Posterior vena cava (tissue), 2 donors: ENCODE measurements at regions of chr3 and their contacts with region 1.

Region 1: DNA sequence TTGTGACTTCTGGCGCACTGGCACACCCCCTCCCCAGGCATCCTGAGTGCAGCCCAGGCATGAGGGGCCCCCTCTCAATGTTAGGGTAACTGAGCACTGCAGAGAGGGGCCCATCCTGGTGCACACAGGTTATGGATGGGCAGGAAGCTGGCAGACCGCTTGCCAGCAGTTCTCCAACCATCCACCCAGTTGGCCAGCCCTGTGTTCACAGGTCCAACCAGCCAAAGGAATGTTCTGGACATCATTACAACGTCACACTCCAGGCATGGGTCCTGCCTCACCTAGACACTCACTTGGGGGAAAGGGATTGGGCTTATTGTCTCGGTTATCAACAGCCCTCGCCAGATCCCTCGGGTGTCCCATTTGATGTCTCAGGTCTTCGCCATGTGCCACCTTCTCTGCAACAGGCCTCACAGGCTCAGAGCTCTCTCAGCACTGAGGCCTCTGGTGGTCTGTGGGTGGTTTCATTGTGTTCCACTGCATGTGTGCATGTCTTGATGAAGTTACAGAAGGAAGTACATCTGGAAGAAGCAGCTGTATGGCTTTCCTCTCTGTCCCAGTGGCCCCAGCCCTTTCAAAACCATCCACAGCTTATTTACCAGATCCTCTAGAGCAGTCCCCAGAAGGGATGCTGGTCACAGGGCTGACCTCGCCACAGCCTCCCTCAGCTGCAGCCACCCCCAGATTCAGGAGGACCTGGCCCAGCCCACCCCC is 23.7 kb downstream of the ADCY5 start:
- DNase-seq: no peak

Region 2: DNA sequence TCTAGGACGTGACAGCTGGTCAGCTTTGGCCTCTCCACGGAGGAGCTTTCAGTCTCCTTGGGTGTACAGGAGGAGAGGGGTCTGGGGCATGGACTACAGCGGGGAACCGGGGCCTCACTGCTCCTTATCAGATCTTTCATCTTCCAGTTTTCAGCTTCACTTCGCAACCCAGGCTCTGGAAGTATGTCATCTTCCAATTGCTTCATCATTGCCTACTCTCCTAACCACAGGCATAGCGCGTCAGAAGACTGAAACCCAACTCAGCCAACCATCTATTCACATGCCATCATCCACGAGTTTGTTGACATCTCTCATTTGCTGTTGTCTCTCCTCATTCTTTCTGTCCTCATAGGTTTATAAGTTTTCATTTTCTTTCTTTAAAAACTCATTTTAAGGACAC is 339.5 kb after region 1 on chr3:
- intact Hi-C with region 1: loop called in 1 of 2 experiments (anchors 5 kb)
- DNase-seq: no peak